ENCODE measurements at regions of chr20 and their contacts with region 1.

Region 1: GRCh38 chr20:50992733-50993457 is 30.0 kb downstream of the KCNG1 start:
- DNase-seq: no peak
- H3K4me3 ChIP-seq: no peak overlapping the region
- H3K27me3 ChIP-seq: no peaks in the 10 kb centered on the region; the same call in 1 of the 2 replicates
- CTCF ChIP-seq: peak; percentile 68

Region 2: DNA sequence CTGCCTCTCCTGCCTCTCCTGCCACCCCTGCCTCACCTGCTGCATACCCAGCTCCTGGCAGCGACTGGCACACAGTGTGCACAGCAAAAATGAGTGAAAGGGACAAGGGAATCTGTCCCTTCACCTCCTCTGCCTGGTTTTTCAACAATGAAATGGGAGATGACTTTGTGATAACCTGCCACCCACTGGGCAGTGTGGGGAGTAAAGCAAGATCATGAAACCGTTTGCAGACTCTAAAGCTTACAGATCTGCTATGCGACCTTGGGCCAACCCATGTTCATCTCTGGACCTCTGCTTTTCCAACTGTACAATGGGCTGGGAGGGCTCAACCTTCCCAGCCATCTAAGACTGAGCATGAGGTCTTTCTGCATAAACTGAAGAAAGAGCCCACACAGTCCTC is 382.7 kb before region 1 on chr20:
- CTCF ChIA-PET with region 1: no interaction called
- POLR2A ChIA-PET with region 1: no interaction called
- DNase-seq: no peak
- H3K4me3 ChIP-seq: no peak overlapping the region
- H3K27me3 ChIP-seq: no peaks in the 10 kb centered on the region
- CTCF ChIP-seq: 0 out of 2 replicates have a peak, but pooled peaks have one; percentile 6

Region 3: DNA sequence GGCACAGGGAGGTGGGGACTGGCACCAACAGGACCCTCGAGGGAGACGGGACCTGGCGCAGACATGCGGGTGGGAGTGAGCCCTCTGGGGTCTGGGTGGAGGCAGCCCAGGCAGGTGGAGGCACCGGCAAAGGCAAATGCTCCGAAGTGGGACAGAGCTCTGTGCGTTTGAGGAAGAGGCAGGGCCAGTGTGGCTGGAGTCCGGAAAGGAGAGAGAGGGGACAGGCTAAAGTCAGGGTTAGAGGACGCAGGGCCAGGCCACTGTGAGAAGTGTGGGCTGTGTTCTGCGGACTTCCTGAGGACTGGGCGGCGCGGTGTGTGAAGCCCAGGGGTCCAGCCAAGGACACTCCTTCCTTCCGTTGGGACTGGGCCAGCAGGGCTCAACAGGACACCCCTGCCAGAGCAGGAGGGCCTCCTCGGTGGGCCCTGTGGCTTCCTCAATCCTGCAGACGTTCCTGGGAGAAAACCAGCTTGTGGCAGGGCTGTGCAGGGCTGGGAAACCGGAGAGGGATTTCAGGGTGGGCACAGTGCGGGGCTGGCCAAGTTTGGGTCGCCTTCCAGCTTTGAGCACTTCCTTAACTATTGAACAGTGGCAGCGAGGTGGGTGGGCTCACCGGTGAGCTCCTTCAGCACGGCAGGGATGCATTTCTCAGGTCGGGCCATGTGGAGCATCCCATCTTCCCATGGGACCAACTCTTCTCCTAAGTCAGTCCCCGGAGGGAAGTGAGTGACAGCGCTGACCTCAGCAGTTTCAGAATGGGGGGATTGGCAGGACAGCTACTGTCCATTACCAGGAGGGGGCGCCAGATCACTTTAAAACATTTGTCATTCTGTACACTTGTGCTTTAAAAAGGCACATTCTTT is 11.8 kb before region 1 on chr20:
- CTCF ChIA-PET with region 1: interaction called, 27 read pairs
- POLR2A ChIA-PET with region 1: no interaction called
- DNase-seq: no peak
- H3K4me3 ChIP-seq: no peak overlapping the region
- H3K27me3 ChIP-seq: no peaks in the 10 kb centered on the region
- CTCF ChIP-seq: peak; percentile 79

Region 4: DNA sequence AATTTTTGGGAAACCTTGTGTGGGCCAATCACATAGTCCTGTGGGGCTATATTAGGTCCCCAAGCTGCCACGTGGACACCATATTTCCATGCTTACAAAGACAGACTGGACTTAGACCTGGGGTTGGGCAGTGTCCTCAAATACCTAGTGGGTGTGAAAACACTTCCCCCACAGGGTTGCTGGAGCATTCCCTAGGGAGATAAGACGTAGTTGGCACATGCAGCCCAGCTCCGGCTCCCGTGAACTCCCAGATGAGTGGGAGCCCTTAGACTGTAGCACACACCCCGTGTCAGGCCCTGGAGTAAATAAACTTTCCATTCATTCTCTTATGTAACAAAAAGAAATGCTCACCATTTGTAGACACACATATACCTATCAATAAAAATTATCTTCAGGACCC is 15.8 kb after region 1 on chr20:
- CTCF ChIA-PET with region 1: interaction called, 19 read pairs
- POLR2A ChIA-PET with region 1: no interaction called
- DNase-seq: no peak
- H3K4me3 ChIP-seq: no peak overlapping the region
- H3K27me3 ChIP-seq: no peaks in the 10 kb centered on the region
- CTCF ChIP-seq: no peak

Region 5: GRCh38 chr20:51014797-51015722 is 22.2 kb after region 1 on chr20:
- CTCF ChIA-PET with region 1: interaction called, 14 read pairs
- POLR2A ChIA-PET with region 1: no interaction called
- DNase-seq: no peak
- H3K4me3 ChIP-seq: no peak overlapping the region
- H3K27me3 ChIP-seq: no peaks in the 10 kb centered on the region
- CTCF ChIP-seq: peak; percentile 88

Region 6: DNA sequence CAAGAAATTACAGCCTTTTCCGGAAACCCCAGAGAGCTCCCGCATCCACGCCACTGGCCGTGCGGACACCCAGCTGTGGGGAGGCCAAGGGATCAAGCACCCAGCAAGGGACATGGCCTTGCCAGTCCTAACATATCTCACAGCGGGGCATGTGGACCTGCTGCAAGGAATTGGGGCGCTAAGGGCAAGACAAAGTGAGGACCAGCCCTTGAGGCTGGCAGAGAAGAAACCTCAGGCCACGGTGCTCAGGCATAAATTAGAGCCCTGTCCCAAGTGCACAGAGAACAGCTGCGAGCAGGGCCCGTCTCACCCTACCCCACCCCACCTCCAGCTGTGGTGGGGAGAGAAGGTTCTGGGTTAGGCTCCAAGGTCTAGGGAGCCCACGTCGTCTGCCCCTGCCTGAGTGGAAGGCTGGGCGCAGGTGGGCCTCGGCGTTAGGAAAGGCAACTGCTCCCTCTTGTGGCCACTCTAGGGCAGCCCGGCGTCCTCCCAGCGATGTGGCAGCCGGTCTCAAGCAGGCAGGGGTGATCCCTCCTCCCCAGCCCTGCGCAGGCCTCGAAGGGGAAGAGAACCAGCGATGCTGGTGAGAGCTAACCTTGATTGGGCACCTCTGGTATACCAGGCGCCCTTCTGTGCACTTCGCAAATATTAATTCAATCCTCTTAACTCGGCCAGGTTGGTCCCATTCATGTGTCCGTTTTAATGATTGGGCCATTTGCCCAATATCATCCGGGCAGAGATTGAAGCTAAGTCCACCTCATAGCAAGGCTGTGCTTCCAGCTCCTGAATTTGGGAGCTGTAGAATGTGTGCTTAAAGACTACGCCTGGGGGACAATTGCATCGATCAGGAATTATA is 313.8 kb after region 1 on chr20:
- CTCF ChIA-PET with region 1: interaction called, 340 read pairs
- POLR2A ChIA-PET with region 1: no interaction called
- DNase-seq: no peak
- H3K4me3 ChIP-seq: no peak overlapping the region
- H3K27me3 ChIP-seq: no peaks in the 10 kb centered on the region
- CTCF ChIP-seq: peak; percentile 92

Region 7: DNA sequence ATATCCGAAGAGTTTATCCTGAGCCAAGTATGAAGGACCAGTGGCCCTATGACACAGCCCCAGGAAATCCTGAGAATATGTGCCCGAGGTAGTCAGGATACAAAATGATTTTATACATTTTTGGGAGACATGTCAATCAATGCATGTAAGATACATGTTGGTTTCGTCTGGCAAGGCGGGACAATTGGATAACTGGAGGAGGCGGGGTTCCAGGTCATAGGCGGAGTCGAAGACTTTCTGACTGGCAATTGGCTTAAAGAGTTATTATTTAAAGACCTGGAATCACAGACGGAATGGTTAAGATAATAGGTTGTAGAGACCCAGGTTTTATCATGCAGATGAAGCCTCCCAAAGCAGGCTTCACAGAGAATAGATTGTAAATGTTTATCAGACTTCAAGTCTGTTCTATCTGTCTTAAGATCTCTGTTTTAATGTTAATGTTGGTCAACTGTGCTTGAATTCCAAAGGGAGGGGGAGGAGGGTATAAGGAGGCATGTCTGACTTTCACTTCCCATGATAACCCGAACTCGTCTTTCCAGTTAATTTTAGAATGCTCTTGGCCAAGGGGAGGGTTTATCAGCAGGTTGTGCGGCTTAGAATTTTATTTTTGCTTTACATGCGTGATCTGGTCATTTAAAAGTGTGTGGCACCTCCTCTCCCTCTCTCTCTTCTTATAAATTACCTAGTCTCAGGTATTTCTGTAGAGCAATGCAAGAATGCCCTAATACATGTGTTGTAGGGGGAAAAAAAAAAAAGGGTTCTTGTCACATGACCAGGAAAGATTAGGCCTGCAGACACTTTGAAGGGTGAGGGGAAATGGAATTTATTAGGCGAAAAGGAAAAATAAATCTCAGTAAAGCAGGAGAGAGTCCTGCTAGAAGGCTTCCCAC is 319.0 kb after region 1 on chr20:
- CTCF ChIA-PET with region 1: interaction called, 340 read pairs
- POLR2A ChIA-PET with region 1: no interaction called
- DNase-seq: no peak
- H3K4me3 ChIP-seq: no peak overlapping the region
- H3K27me3 ChIP-seq: no peaks in the 10 kb centered on the region
- CTCF ChIP-seq: no peak